PC-3 (cell line): ENCODE measurements at regions of chr14 and their contacts with region 1.

Region 1: DNA sequence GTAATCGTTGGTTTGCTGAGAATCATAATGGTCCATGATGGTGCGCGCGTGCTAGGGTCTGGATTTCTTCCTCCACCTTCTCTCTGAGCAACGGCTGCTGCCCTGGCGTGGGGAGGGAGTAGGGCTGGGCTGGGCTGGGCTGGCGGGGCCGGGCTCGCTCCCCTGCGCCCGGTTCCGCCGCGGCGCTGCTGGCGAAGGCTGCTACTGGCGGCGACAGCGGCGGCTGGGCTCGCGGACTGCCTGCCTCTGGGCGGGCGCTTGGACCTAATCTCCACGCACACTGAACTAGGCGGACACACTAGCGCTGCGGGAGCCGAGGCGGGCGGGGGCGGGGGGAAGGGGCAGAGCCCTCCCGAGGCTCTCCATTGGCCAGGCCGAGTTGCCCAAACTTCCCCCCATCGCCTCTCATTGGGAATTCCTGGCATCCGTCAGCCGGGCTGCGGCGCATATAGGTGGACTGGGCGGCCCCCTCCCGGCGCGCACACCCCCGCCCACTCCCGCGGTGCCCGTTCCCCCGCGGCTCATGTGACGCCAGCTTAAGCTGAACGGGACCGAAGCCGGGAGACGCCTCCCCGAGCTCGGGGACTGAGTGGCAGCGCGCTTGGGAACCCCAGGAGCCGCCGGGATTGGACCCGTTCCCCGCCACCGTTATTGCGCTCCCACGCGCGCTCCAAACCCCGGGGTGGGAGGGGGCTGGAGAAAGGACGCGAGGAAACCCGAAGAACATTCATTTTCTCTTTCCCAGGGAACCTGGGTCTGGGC is at the start of gene ACTN1:
- DNase-seq: peak; percentile 98
- ATAC-seq: peak; percentile 68
- H3K4me3 ChIP-seq: peak within 1 kb of the TSS; percentile 98
- H3K27ac ChIP-seq: peak within 1 kb of the TSS; percentile 96
- H3K4me1 ChIP-seq: peaks cover 40% of the 10 kb centered on the region
- H3K27me3 ChIP-seq: no peaks in the 10 kb centered on the region
- CTCF ChIP-seq: no peak
- total RNA-seq, gene ACTN1: 303 and 400 TPM in 2 replicates

Region 2: DNA sequence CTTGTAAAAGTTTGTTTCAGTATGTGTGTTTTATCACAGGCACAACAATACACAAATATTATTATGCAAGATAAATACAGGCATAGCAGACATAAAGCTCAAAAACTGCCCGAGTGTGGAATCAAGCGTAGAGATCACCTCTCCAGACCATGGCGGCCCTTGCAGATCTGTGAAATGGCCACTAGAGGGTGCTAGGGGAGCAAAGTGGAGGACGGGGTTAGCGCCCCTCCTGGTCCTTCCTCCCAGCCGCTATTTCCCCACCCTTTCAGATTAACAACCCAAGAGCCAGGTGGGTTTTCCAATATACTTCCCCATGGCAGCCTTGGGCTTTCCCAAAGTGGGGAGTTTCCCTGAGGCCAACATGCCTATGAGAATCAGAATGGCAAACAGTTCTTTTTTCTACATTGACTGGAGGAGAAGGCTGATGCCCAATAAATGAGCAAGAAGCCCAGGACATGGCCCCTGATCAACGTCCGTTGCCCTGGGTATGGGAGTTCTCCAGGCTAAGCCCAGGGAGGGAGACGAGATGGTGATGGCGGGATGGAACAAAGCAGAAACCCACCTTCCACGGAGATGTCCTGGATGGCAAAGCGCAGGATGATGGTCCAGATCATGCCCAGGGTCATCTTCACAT is 67.5 kb before region 1 on chr14:
- CTCF ChIA-PET with region 1: interaction called, 4 read pairs
- POLR2A ChIA-PET with region 1: interaction called, 3 read pairs
- intact Hi-C with region 1: loop called (anchors 1 kb)
- DNase-seq: peak; percentile 91
- ATAC-seq: peak; percentile 91
- H3K4me3 ChIP-seq: no peak overlapping the region
- H3K27ac ChIP-seq: no peak overlapping the region
- H3K4me1 ChIP-seq: no peaks in the 10 kb centered on the region
- H3K27me3 ChIP-seq: no peaks in the 10 kb centered on the region
- CTCF ChIP-seq: peak; percentile 99

Region 3: DNA sequence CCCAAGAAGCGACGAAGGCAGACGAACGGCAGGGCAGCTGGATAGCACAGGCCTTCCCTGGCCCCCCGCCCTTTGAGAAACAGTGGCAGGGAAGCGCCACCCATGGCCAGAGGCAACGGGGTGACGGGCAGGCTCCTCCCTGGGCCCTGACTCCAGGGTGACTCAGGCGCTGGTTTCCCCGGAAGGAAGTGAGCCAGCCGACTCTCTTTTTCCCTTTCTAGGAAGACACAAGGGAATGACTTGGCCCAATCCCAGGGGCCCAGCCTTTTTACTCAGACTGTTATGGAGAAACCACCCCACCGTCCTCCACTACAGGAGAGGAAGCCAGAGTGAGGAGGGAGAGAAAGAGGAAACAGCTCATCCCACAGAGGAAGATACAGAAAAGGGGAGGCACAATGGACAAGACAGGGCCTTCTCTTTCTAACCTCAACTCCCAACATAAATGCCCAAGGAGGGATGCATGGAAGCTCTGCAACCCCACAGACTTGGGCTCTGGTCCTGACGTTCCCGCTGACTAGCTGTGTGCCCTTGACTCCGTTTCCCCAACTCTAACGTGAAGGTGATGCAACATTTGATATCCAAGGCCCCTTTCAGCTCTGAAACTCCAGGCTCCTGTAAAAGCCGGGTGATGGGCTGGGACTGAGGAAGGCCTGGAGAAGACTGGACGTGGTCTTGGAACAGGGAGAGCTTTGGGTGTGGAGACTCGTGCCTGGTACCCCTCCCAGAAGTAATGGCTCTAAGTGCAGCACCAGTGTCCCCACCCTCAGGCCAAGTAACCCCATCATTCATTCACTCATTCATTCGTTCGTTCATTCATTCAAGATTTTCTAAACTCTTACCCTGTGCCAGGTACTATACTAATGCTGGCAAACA is 27.9 kb before region 1 on chr14:
- CTCF ChIA-PET with region 1: interaction called, 3 read pairs
- POLR2A ChIA-PET with region 1: interaction called, 9 read pairs
- intact Hi-C with region 1: loop called (anchors 1 kb)
- DNase-seq: peak; percentile 100
- ATAC-seq: peak; percentile 91
- H3K4me3 ChIP-seq: peak overlapping the region; percentile 42
- H3K27ac ChIP-seq: peak overlapping the region; percentile 84
- H3K4me1 ChIP-seq: peaks cover 45% of the 10 kb centered on the region
- H3K27me3 ChIP-seq: no peaks in the 10 kb centered on the region
- CTCF ChIP-seq: no peak

Region 4: GRCh38 chr14:69005432-69006147 is 26.4 kb after region 1 on chr14:
- CTCF ChIA-PET with region 1: no interaction called
- POLR2A ChIA-PET with region 1: interaction called, 11 read pairs
- intact Hi-C with region 1: loop called (anchors 1 kb)
- DNase-seq: peak; percentile 91
- ATAC-seq: peak; percentile 90
- H3K4me3 ChIP-seq: peak overlapping the region; percentile 30; the same call in 1 of the 2 replicates
- H3K27ac ChIP-seq: peak overlapping the region; percentile 43
- H3K4me1 ChIP-seq: peaks cover 30% of the 10 kb centered on the region
- H3K27me3 ChIP-seq: no peaks in the 10 kb centered on the region
- CTCF ChIP-seq: no peak

Region 5: GRCh38 chr14:69079183-69079742 is 100.1 kb after region 1 on chr14:
- CTCF ChIA-PET with region 1: no interaction called
- POLR2A ChIA-PET with region 1: interaction called, 9 read pairs
- intact Hi-C with region 1: loop called (anchors 1 kb)
- DNase-seq: peak; percentile 95
- ATAC-seq: peak; percentile 80
- H3K4me3 ChIP-seq: peak overlapping the region; percentile 50
- H3K27ac ChIP-seq: peak overlapping the region; percentile 94
- H3K4me1 ChIP-seq: peaks cover 52% of the 10 kb centered on the region
- H3K27me3 ChIP-seq: no peaks in the 10 kb centered on the region
- CTCF ChIP-seq: no peak

Region 6: GRCh38 chr14:69107407-69108003 is 128.3 kb after region 1 on chr14:
- CTCF ChIA-PET with region 1: interaction called, 3 read pairs
- POLR2A ChIA-PET with region 1: no interaction called
- intact Hi-C with region 1: loop called (anchors 5 kb)
- DNase-seq: peak; percentile 85
- ATAC-seq: peak; percentile 67
- H3K4me3 ChIP-seq: no peak overlapping the region
- H3K27ac ChIP-seq: no peak overlapping the region
- H3K4me1 ChIP-seq: no peaks in the 10 kb centered on the region
- H3K27me3 ChIP-seq: no peaks in the 10 kb centered on the region
- CTCF ChIP-seq: peak; percentile 94

Region 7: GRCh38 chr14:69191340-69192111 is 212.3 kb after region 1 on chr14 and contains the start of gene EXD2:
- CTCF ChIA-PET with region 1: no interaction called
- POLR2A ChIA-PET with region 1: no interaction called
- intact Hi-C with region 1: loop called (anchors 10 kb)
- DNase-seq: peak; percentile 95
- ATAC-seq: peak; percentile 97
- H3K4me3 ChIP-seq: peak within 1 kb of the TSS; percentile 84
- H3K27ac ChIP-seq: peak within 1 kb of the TSS; percentile 56
- H3K4me1 ChIP-seq: peaks cover 13% of the 10 kb centered on the region
- H3K27me3 ChIP-seq: no peaks in the 10 kb centered on the region
- CTCF ChIP-seq: no peak
- total RNA-seq, gene EXD2: 19.0 and 19.9 TPM in 2 replicates